HCT116 (cell line): ENCODE measurements at regions of chr2 and their contacts with region 1.

Region 1: GRCh38 chr2:11583840-11584524 is 50.1 kb downstream of the GREB1 start:
- DNase-seq: peak; percentile 69
- ATAC-seq: peak; percentile 81
- H3K4me3 ChIP-seq: no peak overlapping the region
- H3K27ac ChIP-seq: no peak overlapping the region
- H3K4me1 ChIP-seq: peaks cover 4 to 21% of the 10 kb centered on the region in 2 experiments
- H3K27me3 ChIP-seq: no peaks in the 10 kb centered on the region
- CTCF ChIP-seq: peak; percentile 93 to 96 (median 94)
- POLR2A ChIP-seq: no peak
- RAD21 ChIP-seq: peak; percentile 96

Region 2: DNA sequence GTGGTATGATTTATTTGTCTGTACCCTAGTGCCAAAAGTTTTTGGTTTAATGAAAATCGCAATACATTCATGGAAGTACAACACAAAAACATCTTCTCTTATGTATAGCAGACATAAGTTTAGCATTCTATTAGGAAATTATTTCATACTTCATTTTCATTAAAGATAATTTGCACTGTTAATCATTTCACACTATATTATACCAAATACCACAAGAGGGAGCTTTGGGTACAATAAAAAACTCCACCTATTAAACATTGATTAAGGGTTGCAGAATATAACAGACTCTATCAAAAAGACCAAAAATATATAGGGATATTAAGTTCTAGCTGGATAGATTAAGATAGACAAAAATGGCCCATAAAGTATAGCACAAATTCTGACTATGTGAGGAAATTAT is 349.7 kb before region 1 on chr2:
- CTCF ChIA-PET with region 1: interaction called, 12 read pairs
- POLR2A ChIA-PET with region 1: no interaction called
- RAD21 ChIA-PET with region 1: no interaction called
- intact Hi-C with region 1: loop called (anchors 2 kb)
- DNase-seq: no peak
- ATAC-seq: peak; percentile 60; the same call in 1 of the 2 replicates
- H3K4me3 ChIP-seq: no peak overlapping the region
- H3K27ac ChIP-seq: no peak overlapping the region
- H3K4me1 ChIP-seq: peaks cover 0 to 6% of the 10 kb centered on the region in 2 experiments; a peak in 1 of 4 replicates
- H3K27me3 ChIP-seq: no peaks in the 10 kb centered on the region
- CTCF ChIP-seq: peak; percentile 14 to 82 (median 68); a peak in 5 of 6 replicates
- POLR2A ChIP-seq: no peak
- RAD21 ChIP-seq: peak; percentile 78

Region 3: GRCh38 chr2:11465497-11466406 is 118.2 kb before region 1 on chr2 and contains the start of gene E2F6:
- CTCF ChIA-PET with region 1: interaction called, 10 read pairs
- POLR2A ChIA-PET with region 1: no interaction called
- RAD21 ChIA-PET with region 1: interaction called, 3 to 4 read pairs
- intact Hi-C with region 1: no loop called
- DNase-seq: peak; percentile 88
- ATAC-seq: peak; percentile 86
- H3K4me3 ChIP-seq: peak within 1 kb of the TSS; percentile 65 to 72
- H3K27ac ChIP-seq: peak within 1 kb of the TSS; percentile 79
- H3K4me1 ChIP-seq: peaks cover 0 to 20% of the 10 kb centered on the region in 2 experiments; a peak in 3 of 4 replicates
- H3K27me3 ChIP-seq: no peaks in the 10 kb centered on the region
- CTCF ChIP-seq: no peak
- POLR2A ChIP-seq: no peak
- RAD21 ChIP-seq: no peak
- total RNA-seq, gene E2F6: 22.8 TPM

Region 4: DNA sequence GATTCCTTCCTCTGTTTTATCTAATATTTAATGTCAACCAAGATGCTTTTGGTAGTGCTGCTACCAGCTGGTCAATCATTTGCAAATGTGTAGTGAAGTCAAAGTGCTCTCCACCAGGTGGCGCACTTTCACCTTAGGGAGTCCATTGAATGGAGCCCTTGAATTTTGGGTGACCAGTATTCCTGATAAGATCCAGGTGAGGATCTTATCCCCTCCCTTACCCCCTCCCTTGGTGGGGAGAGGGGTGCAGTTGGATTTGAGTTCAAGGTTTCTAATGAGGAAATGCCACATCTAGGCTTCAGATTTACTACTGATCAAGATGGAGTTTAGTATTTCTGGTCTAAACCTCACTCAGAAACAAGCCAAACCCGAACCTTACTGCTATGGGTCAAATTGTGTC is 106.0 kb before region 1 on chr2:
- CTCF ChIA-PET with region 1: interaction called, 159 read pairs
- POLR2A ChIA-PET with region 1: no interaction called
- RAD21 ChIA-PET with region 1: interaction called, 7 to 13 read pairs
- intact Hi-C with region 1: loop called (anchors 1 kb)
- DNase-seq: peak; percentile 76
- ATAC-seq: peak; percentile 70
- H3K4me3 ChIP-seq: no peak overlapping the region
- H3K27ac ChIP-seq: no peak overlapping the region
- H3K4me1 ChIP-seq: peaks cover 0 to 1% of the 10 kb centered on the region in 2 experiments; a peak in 1 of 4 replicates
- H3K27me3 ChIP-seq: no peaks in the 10 kb centered on the region
- CTCF ChIP-seq: peak; percentile 74 to 96 (median 91)
- POLR2A ChIP-seq: no peak
- RAD21 ChIP-seq: peak; percentile 92

Region 5: DNA sequence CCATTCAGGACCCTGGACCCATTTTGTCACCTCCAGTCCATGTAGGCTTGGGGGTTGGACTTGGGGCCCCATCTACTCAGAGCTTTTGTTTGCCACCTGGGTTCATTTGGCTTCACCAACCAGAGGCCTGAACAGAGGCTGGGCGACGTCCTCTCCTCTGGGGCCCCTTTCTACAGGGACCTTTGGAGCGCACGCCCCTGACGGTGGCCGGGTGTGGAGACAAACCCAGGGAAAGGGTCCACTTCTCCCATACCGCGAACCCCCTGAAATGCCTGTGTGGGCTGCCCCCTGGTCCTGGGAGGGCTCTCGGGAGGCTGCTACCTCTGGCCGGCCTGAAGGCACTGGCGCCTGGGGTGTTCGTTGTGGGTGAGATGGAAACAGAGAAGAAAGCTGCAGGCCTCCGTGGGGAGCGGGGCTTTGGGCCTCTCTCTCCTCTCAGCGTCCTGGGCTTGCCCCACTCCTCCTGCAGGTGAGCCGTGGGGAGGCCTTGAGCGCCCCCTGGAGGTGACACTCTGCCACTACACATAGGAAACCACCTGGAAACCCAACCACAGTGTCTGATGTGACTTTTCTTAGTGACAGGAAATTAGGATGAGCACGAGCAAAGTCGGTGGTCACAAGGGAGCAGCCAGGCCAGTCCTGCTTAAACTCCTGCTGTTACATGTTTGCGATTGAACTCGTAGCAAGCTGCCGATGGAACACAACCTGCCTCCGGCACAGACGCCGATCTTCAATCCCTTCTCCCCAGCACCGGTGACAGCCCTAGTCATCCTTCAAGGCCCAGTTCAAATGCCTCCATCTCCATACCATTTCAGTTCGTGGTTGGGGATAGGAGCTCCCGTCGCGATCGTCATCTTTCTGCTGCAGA is 98.0 kb after region 1 on chr2:
- CTCF ChIA-PET with region 1: interaction called, 5 read pairs
- POLR2A ChIA-PET with region 1: no interaction called
- RAD21 ChIA-PET with region 1: no interaction called
- intact Hi-C with region 1: loop called (anchors 5 kb)
- DNase-seq: peak; percentile 19
- ATAC-seq: peak; percentile 90
- H3K4me3 ChIP-seq: no peak overlapping the region
- H3K27ac ChIP-seq: no peak overlapping the region
- H3K4me1 ChIP-seq: peaks cover 9 to 12% of the 10 kb centered on the region in 2 experiments; a peak in 2 of 4 replicates
- H3K27me3 ChIP-seq: no peaks in the 10 kb centered on the region
- CTCF ChIP-seq: peak; percentile 70 to 99 (median 99)
- POLR2A ChIP-seq: no peak
- RAD21 ChIP-seq: peak; percentile 83

Region 6: DNA sequence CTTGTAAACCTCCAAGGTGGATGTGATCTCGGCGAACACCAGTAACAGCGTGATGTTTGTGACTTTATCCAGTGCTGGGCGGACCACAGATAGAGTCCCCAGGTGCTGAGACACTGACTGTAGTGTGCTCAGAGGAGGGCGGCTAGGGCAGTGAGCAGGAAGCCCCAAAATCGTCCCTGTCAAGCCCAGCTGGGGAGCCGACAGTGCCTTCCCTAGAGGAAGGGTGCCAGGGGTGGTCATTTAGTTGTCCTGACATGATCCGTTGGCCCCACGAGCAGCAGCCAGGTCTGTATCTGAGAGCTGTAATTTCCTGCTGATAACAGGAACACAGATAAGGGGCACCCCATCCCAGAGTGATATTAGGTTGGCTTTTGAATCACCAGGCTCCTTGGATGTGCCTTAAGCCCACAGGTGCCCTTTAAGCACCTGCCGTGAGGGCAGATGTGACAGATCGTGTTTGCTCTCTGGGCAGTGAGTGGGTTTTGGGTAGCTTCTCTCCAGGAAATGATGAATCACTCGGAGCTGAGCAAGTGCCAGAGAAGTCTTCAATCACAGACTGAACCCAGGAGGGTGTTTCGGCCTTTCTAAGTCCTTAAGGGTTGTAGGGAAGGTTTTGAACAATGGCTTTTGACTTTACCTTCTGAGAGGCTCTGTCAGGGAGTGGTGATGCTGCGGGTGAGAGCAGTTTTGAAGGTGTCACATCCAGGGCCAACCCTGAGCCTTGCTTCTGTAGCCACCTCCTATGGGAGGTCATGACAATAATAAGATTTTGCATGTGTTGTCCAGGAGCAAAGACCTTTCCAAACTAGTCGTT is 170.1 kb after region 1 on chr2:
- CTCF ChIA-PET with region 1: no interaction called
- POLR2A ChIA-PET with region 1: no interaction called
- RAD21 ChIA-PET with region 1: no interaction called
- intact Hi-C with region 1: no loop called
- DNase-seq: no peak
- ATAC-seq: peak; percentile 78
- H3K4me3 ChIP-seq: peak overlapping the region in 1 of 2 experiments; percentile 23; a peak in 1 of 4 replicates
- H3K27ac ChIP-seq: 0 out of 2 replicates have a peak overlapping the region, but pooled peaks have one; percentile 21
- H3K4me1 ChIP-seq: peaks cover 32 to 41% of the 10 kb centered on the region in 2 experiments
- H3K27me3 ChIP-seq: no peaks in the 10 kb centered on the region
- CTCF ChIP-seq: no peak
- POLR2A ChIP-seq: no peak
- RAD21 ChIP-seq: no peak